Heart left ventricle (tissue), 16 donors: ENCODE measurements at regions of chr5 and their contacts with region 1.

Region 1: DNA sequence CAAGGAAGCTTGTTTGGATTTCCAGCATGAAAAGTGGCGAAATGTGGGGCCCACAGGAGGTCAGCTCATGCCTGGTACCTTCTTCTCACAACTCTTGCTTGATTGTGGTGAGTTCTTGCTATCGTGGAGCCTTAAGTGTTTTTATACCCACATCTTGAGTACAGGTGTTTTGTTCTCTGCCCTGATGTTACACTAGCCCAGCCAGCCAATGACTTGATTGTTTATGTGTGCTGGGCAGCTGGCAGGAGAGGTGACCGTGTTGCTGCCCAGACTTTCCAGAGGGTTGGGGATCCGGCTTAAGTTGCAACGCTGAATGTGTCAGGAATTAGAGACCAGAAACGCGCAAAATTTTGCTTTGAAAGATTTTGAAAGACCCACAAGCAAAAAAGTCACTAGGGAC is 24.0 kb upstream of the TPPP start:
- DNase-seq: no peak
- ATAC-seq: no peak
- H3K4me3 ChIP-seq: no peak overlapping the region
- H3K27ac ChIP-seq: no peak overlapping the region
- H3K4me1 ChIP-seq: no peaks in the 10 kb centered on the region
- H3K27me3 ChIP-seq: no peaks in the 10 kb centered on the region
- CTCF ChIP-seq: no peak
- POLR2A ChIP-seq: no peak

Region 2: GRCh38 chr5:801472-801871 is 84.3 kb after region 1 on chr5:
- intact Hi-C with region 1: loop called in 2 of 10 experiments (anchors 5 kb)
- DNase-seq: no peak
- ATAC-seq: no peak
- H3K4me3 ChIP-seq: no peak overlapping the region
- H3K27ac ChIP-seq: no peak overlapping the region
- H3K4me1 ChIP-seq: no peaks in the 10 kb centered on the region
- H3K27me3 ChIP-seq: no peaks in the 10 kb centered on the region
- CTCF ChIP-seq: no peak
- POLR2A ChIP-seq: no peak